Activated CD4-positive, alpha-beta T cell treated with anti-CD3 and anti-CD28 coated beads for 36 hours (primary cell): ENCODE measurements at regions of chr4 and their contacts with region 1.

Region 1: GRCh38 chr4:145481164-145481941 is at the start of gene SMAD1:
- DNase-seq: peak; percentile 73
- ATAC-seq: peak; percentile 54
- H3K4me3 Mint-ChIP-seq: peak within 1 kb of the TSS; percentile 73
- H3K27ac Mint-ChIP-seq: peak within 1 kb of the TSS; percentile 75
- H3K4me1 Mint-ChIP-seq: peaks cover 19% of the 10 kb centered on the region
- H3K27me3 Mint-ChIP-seq: peaks cover 12% of the 10 kb centered on the region
- total RNA-seq, gene SMAD1: 5.3 to 10.7 TPM

Region 2: DNA sequence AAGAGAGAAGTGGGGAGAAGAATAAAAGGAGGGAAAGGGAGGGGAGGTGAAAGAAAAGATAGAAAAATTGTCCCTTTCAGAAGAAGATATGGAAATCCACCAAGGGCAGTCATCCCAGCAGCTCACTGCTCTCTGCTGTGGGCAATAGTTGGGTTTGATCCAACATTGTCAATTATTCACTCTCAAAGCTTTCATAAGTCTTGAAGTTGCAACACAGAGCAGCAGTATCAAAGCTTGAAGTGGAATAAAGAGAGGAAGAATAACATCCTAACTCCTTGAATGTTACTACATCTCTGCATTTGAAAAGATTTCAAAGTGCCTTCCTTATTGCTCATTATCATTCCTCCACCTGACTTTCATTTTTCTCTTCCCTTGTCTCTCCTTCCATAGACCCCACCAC is 897.7 kb before region 1 on chr4:
- CTCF ChIA-PET with region 1: no interaction called
- POLR2A ChIA-PET with region 1: no interaction called
- intact Hi-C with region 1: no loop called
- DNase-seq: no peak
- ATAC-seq: no peak
- H3K4me3 Mint-ChIP-seq: no peak overlapping the region
- H3K27ac Mint-ChIP-seq: no peak overlapping the region
- H3K4me1 Mint-ChIP-seq: no peaks in the 10 kb centered on the region
- H3K27me3 Mint-ChIP-seq: no peaks in the 10 kb centered on the region

Region 3: DNA sequence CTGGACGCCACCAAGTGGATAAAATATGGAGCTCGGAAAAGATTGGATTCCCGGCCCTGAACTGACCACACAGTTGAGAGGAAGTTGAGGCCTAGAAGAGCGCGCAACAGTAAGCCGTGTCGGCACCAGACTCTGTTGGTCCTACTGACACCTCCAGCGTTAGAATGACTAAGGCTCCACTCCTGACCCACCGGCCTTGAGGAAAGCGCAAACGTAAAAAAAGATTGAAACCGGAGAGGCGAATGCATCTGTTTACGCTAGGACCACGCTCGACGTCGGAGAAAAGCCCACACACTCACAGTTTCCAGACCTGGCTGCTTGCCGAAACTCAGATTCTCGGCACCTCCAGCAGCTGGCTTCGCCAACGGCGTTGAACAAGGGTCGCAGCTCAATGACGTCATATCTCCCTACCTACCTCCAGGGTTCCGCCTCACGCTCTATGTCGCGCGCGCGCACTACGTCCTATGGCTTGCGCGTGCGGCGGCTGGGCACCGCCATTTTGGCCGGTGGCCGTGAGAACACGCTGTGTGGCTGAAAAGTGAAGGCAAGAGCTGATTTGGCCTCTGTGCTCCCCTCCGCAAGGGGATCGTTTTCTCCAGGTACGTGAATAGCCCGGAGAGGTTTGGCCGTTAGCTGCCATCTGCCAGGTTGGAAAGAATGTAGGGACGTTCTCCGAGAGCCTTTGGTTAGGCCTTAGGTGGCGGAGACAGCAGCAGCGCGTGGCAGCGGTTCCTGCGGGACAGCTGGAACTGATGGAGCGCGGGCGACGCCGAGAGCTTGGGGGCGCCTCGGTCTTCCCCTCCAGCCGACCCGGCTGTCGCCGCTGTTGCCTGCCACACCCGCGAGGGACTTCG is 383.3 kb before region 1 on chr4 and contains the starts of genes ABCE1 and ANAPC10:
- CTCF ChIA-PET with region 1: no interaction called
- POLR2A ChIA-PET with region 1: no interaction called
- intact Hi-C with region 1: loop called in 1 of 2 experiments (anchors 1 kb)
- DNase-seq: peak; percentile 98
- ATAC-seq: peak; percentile 92
- H3K4me3 Mint-ChIP-seq: peak within 1 kb of the TSS; percentile 97
- H3K27ac Mint-ChIP-seq: peak within 1 kb of the TSS; percentile 99
- H3K4me1 Mint-ChIP-seq: peaks cover 22% of the 10 kb centered on the region
- H3K27me3 Mint-ChIP-seq: no peaks in the 10 kb centered on the region
- total RNA-seq, gene ABCE1: 148 to 172 TPM
- total RNA-seq, gene ANAPC10: 27.7 to 31.5 TPM

Region 4: GRCh38 chr4:145299380-145300076 is 181.8 kb before region 1 on chr4:
- CTCF ChIA-PET with region 1: no interaction called
- POLR2A ChIA-PET with region 1: no interaction called
- intact Hi-C with region 1: loop called (anchors 2 kb)
- DNase-seq: peak; percentile 90
- ATAC-seq: peak; percentile 97
- H3K4me3 Mint-ChIP-seq: no peak overlapping the region
- H3K27ac Mint-ChIP-seq: no peak overlapping the region
- H3K4me1 Mint-ChIP-seq: peaks cover 20% of the 10 kb centered on the region
- H3K27me3 Mint-ChIP-seq: peaks cover 8% of the 10 kb centered on the region

Region 5: DNA sequence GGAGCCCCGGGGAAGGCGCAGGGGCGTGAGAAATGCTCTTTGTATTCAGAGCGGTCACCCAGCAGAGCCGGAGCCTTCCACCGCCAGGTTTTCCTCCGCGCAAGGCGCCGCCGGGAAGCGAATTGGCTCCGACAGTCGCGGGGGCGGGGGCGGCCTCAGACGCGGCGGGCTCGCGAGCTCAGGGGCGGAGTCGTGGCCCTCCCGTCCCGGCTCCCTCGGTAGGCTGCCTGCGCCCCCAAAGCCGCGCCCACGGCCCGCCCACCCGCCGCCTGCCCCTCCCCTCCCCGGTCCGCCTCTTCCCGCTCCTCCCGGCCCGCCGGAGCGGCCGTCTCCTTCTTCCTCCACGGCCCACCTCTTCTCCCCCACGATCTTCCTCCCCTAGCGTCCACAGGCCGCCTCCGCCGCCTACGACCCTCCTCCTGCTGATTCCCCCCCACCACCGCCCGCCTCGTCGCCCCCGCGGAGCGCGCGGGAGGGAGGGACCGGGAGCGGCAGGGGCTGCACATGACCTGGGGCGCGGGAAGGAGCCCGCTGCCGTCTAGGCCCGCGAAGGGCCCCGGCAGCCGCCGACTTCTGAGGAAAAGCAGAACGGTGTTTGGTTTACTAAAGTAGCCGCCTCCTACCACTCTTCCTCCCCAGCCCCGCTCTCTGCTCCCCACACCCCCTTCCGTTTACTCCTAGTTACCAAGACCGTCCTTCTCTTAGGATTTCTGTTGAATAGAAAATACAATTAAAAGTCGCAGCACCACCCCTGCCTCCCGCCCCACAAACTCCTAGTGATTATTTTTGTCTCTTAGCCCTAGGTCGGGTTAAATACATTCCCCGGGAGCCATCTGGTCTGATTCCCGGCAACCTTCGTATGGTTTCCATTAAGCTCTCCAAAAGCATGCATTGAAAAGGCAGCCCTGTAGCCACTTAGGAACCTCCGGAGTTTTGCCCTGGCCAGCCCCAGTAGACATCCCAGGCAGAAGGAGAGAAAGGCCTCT is 251.8 kb after region 1 on chr4:
- CTCF ChIA-PET with region 1: no interaction called
- POLR2A ChIA-PET with region 1: no interaction called
- intact Hi-C with region 1: loop called in 1 of 2 experiments (anchors 1 kb)
- DNase-seq: peak; percentile 92
- ATAC-seq: peak; percentile 92
- H3K4me3 Mint-ChIP-seq: peak overlapping the region; percentile 65
- H3K27ac Mint-ChIP-seq: peak overlapping the region; percentile 56
- H3K4me1 Mint-ChIP-seq: peaks cover 23% of the 10 kb centered on the region
- H3K27me3 Mint-ChIP-seq: no peaks in the 10 kb centered on the region

Region 6: DNA sequence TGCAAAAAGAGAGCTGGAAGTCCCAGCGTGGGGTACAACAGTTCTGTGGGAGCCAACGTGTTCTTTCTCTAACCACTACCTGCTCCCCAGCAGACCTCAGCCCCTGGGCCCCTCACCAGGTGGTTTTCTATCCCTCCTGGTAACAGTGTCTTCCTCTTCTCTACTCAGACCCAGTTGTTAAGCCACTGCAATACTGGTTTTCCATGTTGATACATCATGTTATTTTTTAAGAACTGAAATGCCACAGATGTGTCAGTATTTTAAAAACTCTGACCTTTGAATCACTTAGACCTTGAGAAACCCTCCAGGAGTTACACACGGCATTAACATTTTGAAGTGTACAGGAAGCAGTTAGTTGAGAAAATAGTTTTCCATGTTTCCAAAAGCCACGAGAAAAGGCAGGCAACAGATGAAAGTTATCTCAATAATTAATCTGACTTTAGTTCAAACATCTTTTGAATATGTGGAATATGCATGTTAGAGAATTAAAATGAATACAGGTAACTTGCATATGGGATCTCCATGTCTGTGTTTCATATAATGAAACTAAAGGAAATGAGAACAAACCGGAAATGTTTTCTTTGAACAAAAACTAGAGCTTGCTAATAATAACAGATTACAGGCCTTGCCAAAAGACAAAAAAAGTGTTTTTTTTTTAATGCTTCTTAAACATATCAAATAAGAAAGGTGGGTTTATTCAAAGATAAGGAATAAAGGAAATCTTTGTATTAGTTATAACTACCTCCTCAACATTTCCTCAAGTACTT is 348.5 kb after region 1 on chr4:
- CTCF ChIA-PET with region 1: no interaction called
- POLR2A ChIA-PET with region 1: no interaction called
- intact Hi-C with region 1: loop called in 1 of 2 experiments (anchors 5 kb)
- DNase-seq: peak; percentile 68
- ATAC-seq: peak; percentile 68
- H3K4me3 Mint-ChIP-seq: peak overlapping the region; percentile 43
- H3K27ac Mint-ChIP-seq: peak overlapping the region; percentile 77
- H3K4me1 Mint-ChIP-seq: peaks cover 44% of the 10 kb centered on the region
- H3K27me3 Mint-ChIP-seq: no peaks in the 10 kb centered on the region

Region 7: DNA sequence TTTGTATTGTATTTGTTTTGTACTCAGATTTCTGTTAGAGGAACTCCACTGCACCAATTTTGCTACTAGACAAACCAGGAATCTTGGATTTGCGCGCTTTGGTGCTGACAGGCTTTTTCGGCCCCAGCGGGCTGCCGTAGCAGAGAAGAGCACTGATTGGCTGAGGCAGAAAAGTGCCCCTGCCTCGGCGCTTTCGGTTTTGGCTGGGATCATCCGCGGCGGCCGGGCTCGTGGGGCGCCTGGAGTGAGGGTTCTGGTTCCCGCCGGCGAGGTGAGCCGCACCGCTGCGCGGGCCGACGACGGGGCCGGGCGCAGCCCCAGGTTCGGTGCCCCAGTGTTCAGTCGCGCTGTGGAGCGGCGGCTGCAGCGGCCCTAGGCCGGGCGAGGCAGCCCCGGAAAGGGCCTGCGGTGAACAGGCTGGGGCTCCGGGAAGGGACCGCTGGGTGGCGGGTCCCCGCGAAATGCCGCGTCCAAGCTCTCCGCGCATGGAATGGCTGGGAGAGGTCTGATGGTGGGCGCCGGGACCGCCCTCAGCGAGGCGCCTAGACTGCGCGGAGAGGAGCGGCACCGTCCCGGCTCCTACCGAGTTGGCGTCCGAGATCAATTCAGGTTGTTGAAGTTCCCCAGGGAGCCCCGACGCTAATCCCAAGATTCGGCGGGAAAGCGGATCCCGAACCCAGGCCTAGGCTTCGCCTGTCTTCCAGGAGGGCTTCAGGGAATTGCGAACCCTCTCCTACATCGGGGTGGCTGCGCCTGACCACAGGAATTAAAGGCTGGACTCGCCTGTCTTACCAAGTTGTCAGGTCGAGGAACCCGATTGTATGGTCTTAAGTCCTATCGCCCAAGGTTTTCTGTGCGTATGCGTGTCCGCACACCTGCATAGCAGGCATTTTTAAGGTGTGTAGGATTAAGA is 694.4 kb after region 1 on chr4 and contains the start of gene LSM6:
- CTCF ChIA-PET with region 1: no interaction called
- POLR2A ChIA-PET with region 1: no interaction called
- intact Hi-C with region 1: loop called in 1 of 2 experiments (anchors 5 kb)
- DNase-seq: peak; percentile 91
- ATAC-seq: peak; percentile 94
- H3K4me3 Mint-ChIP-seq: peak within 1 kb of the TSS; percentile 82
- H3K27ac Mint-ChIP-seq: peak within 1 kb of the TSS; percentile 85
- H3K4me1 Mint-ChIP-seq: peaks cover 49% of the 10 kb centered on the region
- H3K27me3 Mint-ChIP-seq: no peaks in the 10 kb centered on the region
- total RNA-seq, gene LSM6: 64.9 to 66.9 TPM